ENCODE measurements at regions of chr18 and their contacts with region 1.

Region 1: DNA sequence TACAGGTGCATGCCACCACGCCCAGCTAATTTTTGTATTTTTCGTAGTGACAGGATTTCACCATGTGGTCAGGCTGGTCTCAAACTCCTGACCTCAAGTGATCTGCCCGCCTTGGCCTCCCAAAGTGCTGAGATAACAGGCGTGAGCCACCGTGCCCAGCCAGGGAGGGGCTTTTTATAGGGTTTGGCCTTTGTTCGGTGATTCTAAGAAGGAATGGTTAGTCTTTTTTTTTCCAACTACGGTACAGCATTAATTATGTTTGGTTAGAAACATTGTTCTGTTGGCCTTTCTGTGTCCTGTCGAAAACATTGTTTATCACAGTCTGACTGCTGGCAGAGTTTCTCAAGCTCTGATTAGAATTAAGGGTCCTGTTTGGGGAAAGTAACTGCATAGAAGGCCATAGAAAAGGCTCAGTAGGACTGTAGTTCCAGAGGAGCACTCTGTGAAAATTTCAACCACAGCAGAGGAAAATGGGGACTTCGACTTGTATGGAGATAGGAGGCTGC is 19.3 kb upstream of the SMCHD1 start:
- DNase-seq: no peak
- H3K4me3 ChIP-seq: peak overlapping the region; percentile 19 to 31
- H3K4me3 Mint-ChIP-seq: peak overlapping the region; percentile 81 to 88 (median 85)
- H3K27ac ChIP-seq: peak overlapping the region; percentile 87
- H3K27ac Mint-ChIP-seq: peak overlapping the region in 6 of 7 donors; percentile 97 to 99 (median 98)
- H3K4me1 ChIP-seq: peaks cover 88% of the 10 kb centered on the region
- H3K4me1 Mint-ChIP-seq: peaks cover 61 to 100% (median 88%) of the 10 kb centered on the region in 4 donors
- H3K27me3 ChIP-seq: no peaks in the 10 kb centered on the region
- H3K27me3 Mint-ChIP-seq: peaks cover 0 to 2% of the 10 kb centered on the region in 2 donors

Region 2: DNA sequence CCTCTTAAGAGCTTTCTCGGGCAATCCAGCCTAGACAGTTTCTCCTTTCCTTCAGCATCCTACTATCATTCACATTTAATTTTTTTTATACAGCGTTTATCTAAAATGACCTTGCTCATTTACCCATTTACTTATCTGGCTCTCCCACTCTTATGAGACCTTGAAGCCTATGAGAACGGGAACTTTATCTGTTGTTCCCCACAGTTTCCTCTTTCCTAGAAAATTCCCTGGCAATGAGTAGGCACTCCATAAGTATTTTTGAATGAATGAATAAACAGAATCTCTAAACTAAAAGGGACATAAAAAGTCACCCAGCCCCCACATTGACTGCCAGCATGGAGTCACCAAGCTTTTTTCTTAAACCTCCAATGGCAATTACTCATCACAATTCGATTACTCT is 418.1 kb before region 1 on chr18:
- CTCF ChIA-PET with region 1: no interaction called
- POLR2A ChIA-PET with region 1: no interaction called
- intact Hi-C with region 1: no loop called
- DNase-seq: no peak
- H3K4me3 ChIP-seq: no peak overlapping the region
- H3K4me3 Mint-ChIP-seq: no peak overlapping the region
- H3K27ac ChIP-seq: no peak overlapping the region
- H3K27ac Mint-ChIP-seq: no peak overlapping the region
- H3K4me1 ChIP-seq: no peaks in the 10 kb centered on the region
- H3K4me1 Mint-ChIP-seq: no peaks in the 10 kb centered on the region
- H3K27me3 ChIP-seq: no peaks in the 10 kb centered on the region
- H3K27me3 Mint-ChIP-seq: peaks cover 7 to 16% of the 10 kb centered on the region in 2 donors

Region 3: GRCh38 chr18:2534906-2535305 is 101.3 kb before region 1 on chr18:
- CTCF ChIA-PET with region 1: no interaction called
- POLR2A ChIA-PET with region 1: no interaction called
- intact Hi-C with region 1: no loop called
- DNase-seq: no peak
- H3K4me3 ChIP-seq: no peak overlapping the region
- H3K4me3 Mint-ChIP-seq: no peak overlapping the region
- H3K27ac ChIP-seq: no peak overlapping the region
- H3K27ac Mint-ChIP-seq: no peak overlapping the region
- H3K4me1 ChIP-seq: no peaks in the 10 kb centered on the region
- H3K4me1 Mint-ChIP-seq: no peaks in the 10 kb centered on the region
- H3K27me3 ChIP-seq: no peaks in the 10 kb centered on the region
- H3K27me3 Mint-ChIP-seq: no peaks in the 10 kb centered on the region

Region 4: GRCh38 chr18:2589345-2590068 is 46.7 kb before region 1 on chr18:
- CTCF ChIA-PET with region 1: interaction called, 24 read pairs
- POLR2A ChIA-PET with region 1: interaction called, 121 read pairs
- intact Hi-C with region 1: loop called (anchors 5 kb)
- DNase-seq: peak in 4 of 5 donors; percentile 15 to 37 (median 22)
- H3K4me3 ChIP-seq: peak overlapping the region in 1 of 2 donors; percentile 38
- H3K4me3 Mint-ChIP-seq: peak overlapping the region in 7 of 8 donors; percentile 63 to 88 (median 76)
- H3K27ac ChIP-seq: peak overlapping the region; percentile 52
- H3K27ac Mint-ChIP-seq: peak overlapping the region; percentile 65 to 95 (median 93)
- H3K4me1 ChIP-seq: peaks cover 48% of the 10 kb centered on the region
- H3K4me1 Mint-ChIP-seq: peaks cover 22 to 57% (median 37%) of the 10 kb centered on the region in 4 donors
- H3K27me3 ChIP-seq: no peaks in the 10 kb centered on the region
- H3K27me3 Mint-ChIP-seq: no peaks in the 10 kb centered on the region

Region 5: DNA sequence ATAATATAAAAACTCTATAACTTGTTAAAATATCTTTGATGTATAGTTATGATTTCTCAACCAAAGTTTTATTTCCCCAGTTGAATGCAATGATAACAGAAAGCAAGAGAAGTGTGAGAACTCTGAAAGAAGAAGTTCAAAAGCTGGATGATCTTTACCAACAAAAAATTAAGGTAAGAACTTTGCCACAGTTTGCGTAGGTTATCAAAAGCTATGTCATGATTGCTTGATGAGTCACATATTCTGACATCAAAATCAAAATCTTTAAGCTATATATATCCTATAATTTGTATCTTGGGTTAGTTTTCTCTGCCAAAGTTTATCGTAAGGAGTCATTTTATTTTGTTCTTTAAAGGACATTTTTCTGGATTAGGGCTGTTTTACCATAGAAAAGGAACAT is 29.8 kb before region 1 on chr18:
- CTCF ChIA-PET with region 1: interaction called, 25 read pairs
- POLR2A ChIA-PET with region 1: interaction called, 282 read pairs
- intact Hi-C with region 1: loop called (anchors 1 kb)
- DNase-seq: peak in 4 of 5 donors; percentile 41 to 54 (median 46)
- H3K4me3 ChIP-seq: peak overlapping the region in 1 of 2 donors; percentile 8
- H3K4me3 Mint-ChIP-seq: peak overlapping the region; percentile 52 to 89 (median 66)
- H3K27ac ChIP-seq: peak overlapping the region; percentile 55
- H3K27ac Mint-ChIP-seq: peak overlapping the region; percentile 76 to 97 (median 93)
- H3K4me1 ChIP-seq: peaks cover 59% of the 10 kb centered on the region
- H3K4me1 Mint-ChIP-seq: peaks cover 35 to 52% (median 44%) of the 10 kb centered on the region in 4 donors
- H3K27me3 ChIP-seq: no peaks in the 10 kb centered on the region
- H3K27me3 Mint-ChIP-seq: no peaks in the 10 kb centered on the region

Region 6: GRCh38 chr18:2680216-2680792 is 44.1 kb after region 1 on chr18:
- CTCF ChIA-PET with region 1: interaction called, 4 read pairs
- POLR2A ChIA-PET with region 1: interaction called, 31 read pairs
- intact Hi-C with region 1: no loop called
- DNase-seq: no peak
- H3K4me3 ChIP-seq: no peak overlapping the region
- H3K4me3 Mint-ChIP-seq: peak overlapping the region in 5 of 8 donors; percentile 3 to 64 (median 39)
- H3K27ac ChIP-seq: no peak overlapping the region
- H3K27ac Mint-ChIP-seq: peak overlapping the region in 5 of 7 donors; percentile 10 to 78 (median 67)
- H3K4me1 ChIP-seq: peaks cover 69% of the 10 kb centered on the region
- H3K4me1 Mint-ChIP-seq: peaks cover 42 to 75% (median 54%) of the 10 kb centered on the region in 4 donors
- H3K27me3 ChIP-seq: no peaks in the 10 kb centered on the region
- H3K27me3 Mint-ChIP-seq: no peaks in the 10 kb centered on the region

Measured in CD4-positive, alpha-beta memory T cell (primary cell).